A549 (cell line): ENCODE measurements at regions of chr3 and their contacts with region 1.

Region 1: GRCh38 chr3:112293368-112294321 is at the start of gene SLC9C1:
- DNase-seq: peak; percentile 21 to 73
- ATAC-seq: peak; percentile 87 to 92
- H3K4me3 ChIP-seq: peak within 1 kb of the TSS; percentile 31
- H3K27ac ChIP-seq: peak within 1 kb of the TSS in 1 of 2 experiments; percentile 35; a peak in 1 of 6 replicates
- H3K4me1 ChIP-seq: no peaks in the 10 kb centered on the region
- CTCF ChIP-seq: peak; percentile 74
- EP300 ChIP-seq: no peak
- POLR2A ChIP-seq: no peak
- RAD21 ChIP-seq: peak; percentile 70 to 72
- polyA plus RNA-seq, gene SLC9C1: not detected in 2 replicates

Region 2: DNA sequence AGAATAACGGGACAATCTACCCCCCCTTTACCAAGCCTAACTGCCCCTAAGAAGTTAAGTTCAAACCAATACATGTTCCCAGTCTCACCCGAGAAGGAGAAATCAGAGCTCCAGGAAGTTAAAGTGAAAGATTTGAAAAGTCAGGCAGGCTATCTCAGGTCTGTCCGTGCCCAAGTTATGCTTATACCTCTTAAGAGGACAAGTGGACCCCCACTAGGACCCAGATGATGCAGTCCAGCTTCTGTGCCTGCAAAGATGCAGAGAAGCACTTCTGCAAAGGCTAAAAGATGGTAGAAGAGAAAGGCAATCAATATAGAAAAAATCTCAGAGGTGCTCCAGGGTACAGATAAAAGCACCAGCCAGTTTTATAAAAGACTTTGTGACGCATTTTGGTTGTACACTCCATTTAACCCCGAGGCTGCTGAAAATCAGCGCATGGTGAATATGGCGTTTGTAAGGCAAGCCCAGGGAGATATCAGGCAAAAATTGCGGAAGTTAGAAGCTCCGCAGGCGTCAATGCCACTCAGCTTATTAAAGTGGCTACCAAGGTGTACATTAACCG is 10.2 kb after region 1 on chr3:
- CTCF ChIA-PET with region 1: interaction called, 16 read pairs
- POLR2A ChIA-PET with region 1: no interaction called
- DNase-seq: no peak
- ATAC-seq: no peak
- H3K4me3 ChIP-seq: no peak overlapping the region
- H3K27ac ChIP-seq: no peak overlapping the region
- H3K4me1 ChIP-seq: no peaks in the 10 kb centered on the region
- CTCF ChIP-seq: no peak
- EP300 ChIP-seq: no peak
- POLR2A ChIP-seq: no peak
- RAD21 ChIP-seq: no peak

Region 3: DNA sequence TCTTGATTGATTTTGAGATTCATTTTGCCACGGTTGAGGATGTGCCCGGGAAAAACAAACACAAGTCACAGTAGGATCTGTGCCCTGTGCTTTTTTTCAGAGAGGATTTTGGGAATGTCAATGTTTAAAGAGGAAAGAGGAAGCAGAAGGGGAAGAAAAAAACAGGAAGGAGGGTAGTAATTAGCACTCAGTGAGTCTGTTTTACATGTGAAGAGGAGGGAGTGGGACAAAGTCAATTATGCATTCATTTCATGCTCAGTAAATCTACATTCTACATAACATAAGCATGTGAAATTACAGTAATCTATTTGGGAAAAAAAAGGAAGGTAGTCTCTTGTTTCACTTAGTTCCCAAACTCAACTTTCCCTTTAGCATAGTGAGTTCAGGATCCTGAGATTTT is 21.0 kb after region 1 on chr3:
- CTCF ChIA-PET with region 1: interaction called, 13 read pairs
- POLR2A ChIA-PET with region 1: no interaction called
- DNase-seq: no peak
- ATAC-seq: no peak
- H3K4me3 ChIP-seq: no peak overlapping the region
- H3K27ac ChIP-seq: no peak overlapping the region
- H3K4me1 ChIP-seq: no peaks in the 10 kb centered on the region
- CTCF ChIP-seq: no peak
- EP300 ChIP-seq: no peak
- POLR2A ChIP-seq: no peak
- RAD21 ChIP-seq: no peak

Region 4: DNA sequence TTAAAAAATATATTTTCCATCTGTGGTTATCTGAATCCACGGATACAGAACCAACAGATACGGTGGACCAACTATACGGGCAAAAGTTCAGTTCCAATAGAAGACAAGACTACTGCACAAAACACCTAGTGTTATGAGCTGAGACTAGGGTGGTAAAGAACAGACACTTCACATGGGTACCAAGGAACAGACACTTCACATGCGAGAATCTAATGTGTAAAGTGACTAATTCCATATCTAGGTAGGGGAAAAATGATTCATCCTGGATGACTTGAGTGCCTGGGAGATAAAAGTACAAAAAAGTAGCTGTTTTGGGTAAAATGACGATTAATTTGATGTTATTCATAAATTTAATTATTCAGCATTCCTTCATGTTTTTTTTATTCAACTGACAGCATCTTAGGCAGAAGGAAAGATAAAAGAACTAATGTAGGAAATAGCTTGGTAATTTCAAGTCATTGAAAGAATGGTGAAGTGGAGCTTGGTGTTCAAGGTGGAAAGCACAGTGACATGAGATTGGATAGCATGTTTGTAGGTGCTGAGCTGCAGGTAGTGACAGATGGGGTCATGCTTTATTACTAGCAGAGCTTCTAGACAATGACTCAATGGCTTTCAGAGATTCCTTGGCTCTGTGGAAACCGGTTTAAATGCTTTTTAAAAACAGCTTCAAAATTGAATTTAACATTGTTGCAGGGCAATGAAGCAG is 44.5 kb after region 1 on chr3:
- CTCF ChIA-PET with region 1: no interaction called
- POLR2A ChIA-PET with region 1: no interaction called
- DNase-seq: no peak
- ATAC-seq: no peak
- H3K4me3 ChIP-seq: no peak overlapping the region
- H3K27ac ChIP-seq: no peak overlapping the region
- H3K4me1 ChIP-seq: no peaks in the 10 kb centered on the region
- CTCF ChIP-seq: no peak
- EP300 ChIP-seq: no peak
- POLR2A ChIP-seq: no peak
- RAD21 ChIP-seq: no peak

Region 5: DNA sequence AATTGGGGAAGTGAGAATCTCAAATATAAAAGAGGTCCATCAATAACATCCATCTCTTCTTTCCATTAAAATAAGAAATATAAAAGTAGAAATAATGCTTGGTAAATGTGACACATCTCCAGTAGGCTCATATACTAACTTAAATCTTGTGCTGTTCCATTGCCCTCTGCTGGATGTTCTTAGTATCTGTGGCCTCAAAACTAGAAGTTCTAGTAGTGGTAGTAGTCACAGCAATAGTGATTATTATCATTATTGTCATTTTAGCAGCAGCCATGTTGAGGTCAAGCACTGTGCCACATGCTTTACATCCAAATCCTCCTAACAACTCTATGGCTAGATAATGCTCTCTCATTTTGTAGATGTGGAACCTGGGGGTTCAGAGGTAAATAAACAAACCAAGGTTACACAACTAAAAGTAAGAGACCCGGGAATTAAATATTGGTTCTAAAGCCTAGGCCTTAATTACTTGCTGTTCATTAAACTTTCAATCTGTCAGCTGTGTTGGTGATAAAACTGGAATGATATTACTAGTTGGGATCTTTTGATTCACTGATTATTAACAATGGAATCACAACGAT is 225.9 kb after region 1 on chr3:
- CTCF ChIA-PET with region 1: interaction called, 22 read pairs
- POLR2A ChIA-PET with region 1: no interaction called
- DNase-seq: peak; percentile 50 to 73
- ATAC-seq: peak; percentile 87 to 97; a peak in 5 of 6 replicates
- H3K4me3 ChIP-seq: no peak overlapping the region
- H3K27ac ChIP-seq: no peak overlapping the region
- H3K4me1 ChIP-seq: no peaks in the 10 kb centered on the region
- CTCF ChIP-seq: peak; percentile 80
- EP300 ChIP-seq: no peak
- POLR2A ChIP-seq: no peak
- RAD21 ChIP-seq: peak; percentile 77 to 78